Naive thymus-derived CD4-positive, alpha-beta T cell (primary cell): ENCODE measurements at regions of chr3 and their contacts with region 1.

Region 1: DNA sequence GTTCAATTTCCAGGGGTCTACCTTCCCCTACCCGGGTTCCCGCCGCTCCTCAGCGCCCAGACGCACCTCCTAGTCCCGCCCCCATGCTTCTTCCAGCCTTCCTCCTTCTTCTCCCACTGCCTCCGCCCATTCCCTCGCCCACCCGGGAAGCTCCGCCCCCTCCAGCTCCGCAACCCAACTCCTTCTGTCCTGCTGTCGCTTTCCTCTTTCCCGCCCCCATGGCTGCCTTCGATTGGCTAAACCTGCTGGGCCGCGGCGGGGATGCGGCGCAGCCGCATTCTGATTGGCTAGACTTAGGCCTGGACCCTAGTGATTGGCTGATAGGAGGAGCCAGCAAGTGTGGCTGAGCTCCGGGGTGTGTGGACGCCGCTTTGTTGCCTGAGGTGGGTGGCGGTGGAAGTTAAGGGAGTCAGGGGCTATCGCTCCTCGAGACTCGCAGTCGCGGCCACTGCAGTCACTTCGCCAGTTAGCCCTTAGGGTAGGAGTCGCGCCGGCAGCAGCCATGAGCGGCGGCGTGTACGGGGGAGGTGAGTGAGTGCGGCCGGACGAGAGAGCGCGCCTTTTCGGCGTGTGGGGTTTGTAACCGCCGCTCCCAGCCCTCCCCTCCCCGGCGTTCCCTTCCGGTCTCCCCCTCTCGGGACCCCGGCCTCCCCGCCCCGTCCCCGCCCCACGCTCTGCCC is at the start of gene ACTL6A:
- DNase-seq: peak; percentile 86 to 98 (median 96)
- ATAC-seq: peak; percentile 96
- H3K4me3 ChIP-seq: peak within 1 kb of the TSS; percentile 73
- H3K4me3 Mint-ChIP-seq: peak within 1 kb of the TSS; percentile 91 to 100 (median 99)
- H3K27ac ChIP-seq: peak within 1 kb of the TSS; percentile 78
- H3K27ac Mint-ChIP-seq: peak within 1 kb of the TSS; percentile 86 to 98 (median 95)
- H3K4me1 ChIP-seq: peaks cover 10% of the 10 kb centered on the region in 2 donors
- H3K4me1 Mint-ChIP-seq: peaks cover 13 to 49% (median 33%) of the 10 kb centered on the region in 7 donors
- H3K27me3 ChIP-seq: no peaks in the 10 kb centered on the region
- H3K27me3 Mint-ChIP-seq: peaks cover 0 to 13% (median 0%) of the 10 kb centered on the region in 5 donors
- total RNA-seq, gene ACTL6A: 23.2 to 78.3 (median 49.0) TPM

Region 2: DNA sequence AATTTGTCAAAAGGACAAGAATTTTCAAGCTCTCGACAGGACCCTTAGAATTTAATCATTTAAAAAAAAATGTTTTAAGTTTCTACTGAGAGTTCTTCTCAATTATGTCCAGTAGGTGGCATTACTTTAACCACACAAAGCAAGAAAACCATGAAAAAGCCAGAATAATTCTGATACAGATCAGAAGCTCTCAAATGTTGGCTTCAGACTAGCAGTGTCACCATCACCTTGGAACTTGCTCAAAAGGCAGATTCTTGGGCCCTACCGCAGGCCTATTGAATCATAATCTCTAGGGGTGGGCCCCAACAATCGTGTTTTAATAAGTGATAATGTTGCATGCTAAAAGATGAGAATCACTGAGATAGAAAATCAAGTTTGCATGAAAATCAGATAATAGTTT is 1126.0 kb before region 1 on chr3:
- CTCF ChIA-PET with region 1: no interaction called
- POLR2A ChIA-PET with region 1: no interaction called
- intact Hi-C with region 1: loop called in 1 of 2 experiments (anchors 2 kb)
- DNase-seq: peak in 5 of 9 donors; percentile 1 to 26 (median 13)
- ATAC-seq: peak; percentile 59
- H3K4me3 ChIP-seq: no peak overlapping the region
- H3K4me3 Mint-ChIP-seq: no peak overlapping the region
- H3K27ac ChIP-seq: no peak overlapping the region
- H3K27ac Mint-ChIP-seq: no peak overlapping the region
- H3K4me1 ChIP-seq: no peaks in the 10 kb centered on the region
- H3K4me1 Mint-ChIP-seq: no peaks in the 10 kb centered on the region
- H3K27me3 ChIP-seq: no peaks in the 10 kb centered on the region
- H3K27me3 Mint-ChIP-seq: peaks cover 0 to 8% (median 0%) of the 10 kb centered on the region in 5 donors

Region 3: GRCh38 chr3:179105881-179106280 is 456.9 kb before region 1 on chr3:
- CTCF ChIA-PET with region 1: no interaction called
- POLR2A ChIA-PET with region 1: no interaction called
- intact Hi-C with region 1: loop called (anchors 1 kb)
- DNase-seq: no peak
- ATAC-seq: no peak
- H3K4me3 ChIP-seq: no peak overlapping the region
- H3K4me3 Mint-ChIP-seq: no peak overlapping the region
- H3K27ac ChIP-seq: no peak overlapping the region
- H3K27ac Mint-ChIP-seq: peak overlapping the region in 1 of 9 donors; percentile 84
- H3K4me1 ChIP-seq: no peaks in the 10 kb centered on the region
- H3K4me1 Mint-ChIP-seq: peaks cover 0 to 5% (median 3%) of the 10 kb centered on the region in 7 donors
- H3K27me3 ChIP-seq: no peaks in the 10 kb centered on the region
- H3K27me3 Mint-ChIP-seq: peaks cover 0 to 12% (median 5%) of the 10 kb centered on the region in 5 donors

Region 4: DNA sequence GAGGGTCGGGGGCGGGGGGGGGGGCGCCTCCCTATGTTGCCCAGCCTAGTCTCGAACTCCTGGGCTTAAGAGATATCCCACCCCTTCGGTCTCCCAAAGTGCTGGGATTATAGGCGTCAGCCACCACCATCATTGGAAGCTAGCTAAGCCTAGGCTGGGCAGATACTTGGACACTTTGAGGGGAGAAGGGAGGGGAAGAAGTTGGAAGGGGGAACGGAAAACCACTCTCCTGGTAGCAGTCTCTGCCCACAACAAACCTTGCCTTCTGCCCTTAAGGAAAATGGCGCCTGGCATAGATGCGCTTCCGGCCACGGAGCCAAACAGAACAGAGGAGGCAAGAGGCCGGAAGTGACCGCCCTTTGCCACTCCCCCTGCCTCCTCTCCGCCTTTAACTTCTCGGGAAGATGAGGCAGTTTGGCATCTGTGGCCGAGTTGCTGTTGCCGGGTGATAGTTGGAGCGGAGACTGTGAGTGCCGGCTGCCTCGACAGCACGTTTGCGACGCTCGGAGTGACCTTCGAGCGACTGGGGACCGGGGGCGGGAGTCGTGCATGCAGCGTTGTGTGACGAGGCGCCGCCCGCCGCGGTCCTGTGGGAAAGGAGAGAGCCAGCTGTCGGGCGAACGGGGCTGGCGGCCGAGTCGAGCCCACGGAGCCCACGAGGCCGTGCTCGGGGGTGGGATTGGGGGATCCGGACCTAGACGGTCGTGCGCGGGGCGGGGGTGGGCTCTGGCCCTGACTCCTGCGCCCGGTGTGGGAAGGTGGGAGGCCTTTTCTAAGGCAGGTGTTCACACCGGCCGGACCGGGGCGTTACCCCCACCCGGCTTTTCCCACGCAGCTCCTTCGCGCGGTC is 215.2 kb before region 1 on chr3 and contains the start of gene MFN1:
- CTCF ChIA-PET with region 1: interaction called, 3 read pairs
- POLR2A ChIA-PET with region 1: interaction called, 5 read pairs
- intact Hi-C with region 1: loop called (anchors 1 kb)
- DNase-seq: peak; percentile 69 to 91 (median 88)
- ATAC-seq: peak; percentile 99
- H3K4me3 ChIP-seq: peak within 1 kb of the TSS; percentile 99
- H3K4me3 Mint-ChIP-seq: peak within 1 kb of the TSS; percentile 97 to 100 (median 98)
- H3K27ac ChIP-seq: peak within 1 kb of the TSS; percentile 81
- H3K27ac Mint-ChIP-seq: peak within 1 kb of the TSS; percentile 84 to 98 (median 94)
- H3K4me1 ChIP-seq: peaks cover 8 to 13% of the 10 kb centered on the region in 2 donors
- H3K4me1 Mint-ChIP-seq: peaks cover 7 to 39% (median 28%) of the 10 kb centered on the region in 7 donors
- H3K27me3 ChIP-seq: no peaks in the 10 kb centered on the region
- H3K27me3 Mint-ChIP-seq: no peaks in the 10 kb centered on the region
- total RNA-seq, gene MFN1: 32.2 to 58.1 (median 40.3) TPM

Region 5: GRCh38 chr3:179421500-179421899 is 141.2 kb before region 1 on chr3:
- CTCF ChIA-PET with region 1: no interaction called
- POLR2A ChIA-PET with region 1: no interaction called
- intact Hi-C with region 1: no loop called
- DNase-seq: no peak
- ATAC-seq: no peak
- H3K4me3 ChIP-seq: no peak overlapping the region
- H3K4me3 Mint-ChIP-seq: no peak overlapping the region
- H3K27ac ChIP-seq: no peak overlapping the region
- H3K27ac Mint-ChIP-seq: no peak overlapping the region
- H3K4me1 ChIP-seq: no peaks in the 10 kb centered on the region
- H3K4me1 Mint-ChIP-seq: no peaks in the 10 kb centered on the region
- H3K27me3 ChIP-seq: no peaks in the 10 kb centered on the region
- H3K27me3 Mint-ChIP-seq: peaks cover 0 to 5% (median 0%) of the 10 kb centered on the region in 5 donors

Region 6: GRCh38 chr3:179526989-179527391 is 35.7 kb before region 1 on chr3:
- CTCF ChIA-PET with region 1: no interaction called
- POLR2A ChIA-PET with region 1: no interaction called
- intact Hi-C with region 1: no loop called
- DNase-seq: no peak
- ATAC-seq: no peak
- H3K4me3 ChIP-seq: no peak overlapping the region
- H3K4me3 Mint-ChIP-seq: no peak overlapping the region
- H3K27ac ChIP-seq: no peak overlapping the region
- H3K27ac Mint-ChIP-seq: no peak overlapping the region
- H3K4me1 ChIP-seq: no peaks in the 10 kb centered on the region
- H3K4me1 Mint-ChIP-seq: peaks cover 0 to 5% (median 0%) of the 10 kb centered on the region in 7 donors
- H3K27me3 ChIP-seq: no peaks in the 10 kb centered on the region
- H3K27me3 Mint-ChIP-seq: peaks cover 0 to 26% (median 12%) of the 10 kb centered on the region in 5 donors

Region 7: DNA sequence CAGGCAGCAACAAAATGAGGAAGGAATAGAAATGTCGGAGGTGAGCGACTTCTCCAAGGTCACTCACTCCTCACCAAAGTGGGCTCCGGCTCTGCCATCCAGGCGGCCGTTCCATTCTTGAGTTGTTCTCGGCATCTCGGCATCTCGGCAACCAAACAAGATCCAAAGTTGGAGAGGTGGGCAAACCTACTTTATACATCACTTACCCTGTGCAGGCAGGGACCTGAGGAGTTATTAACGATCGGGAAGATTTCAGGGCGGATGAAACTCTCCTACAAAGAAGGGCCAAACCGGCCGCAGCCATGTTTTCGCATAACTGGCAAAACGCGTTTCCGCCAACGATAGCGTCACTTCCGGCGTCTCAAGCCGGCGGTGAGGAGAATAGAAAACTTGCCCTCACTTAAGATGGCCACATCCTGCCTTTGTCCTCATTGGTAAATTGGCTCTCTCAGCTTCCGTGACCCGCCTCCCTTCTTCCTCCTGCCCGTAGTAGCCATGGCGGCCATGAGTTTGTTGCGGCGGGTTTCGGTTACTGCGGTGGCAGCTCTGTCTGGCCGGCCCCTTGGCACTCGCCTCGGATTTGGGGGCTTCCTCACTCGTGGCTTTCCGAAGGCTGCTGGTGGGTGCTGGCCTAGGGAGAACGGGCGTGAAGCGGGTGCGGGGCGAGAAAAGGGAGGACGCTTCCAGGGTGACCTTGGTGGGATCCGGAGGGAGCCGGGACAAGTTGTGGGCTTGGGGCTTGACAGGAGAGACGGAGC is 41.8 kb after region 1 on chr3 and contains the starts of genes MRPL47 and NDUFB5:
- CTCF ChIA-PET with region 1: no interaction called
- POLR2A ChIA-PET with region 1: interaction called, 13 read pairs
- intact Hi-C with region 1: loop called (anchors 1 kb)
- DNase-seq: peak; percentile 76 to 95 (median 92)
- ATAC-seq: peak; percentile 100
- H3K4me3 ChIP-seq: peak within 1 kb of the TSS; percentile 95
- H3K4me3 Mint-ChIP-seq: peak within 1 kb of the TSS; percentile 95 to 99 (median 99)
- H3K27ac ChIP-seq: peak within 1 kb of the TSS; percentile 90
- H3K27ac Mint-ChIP-seq: peak within 1 kb of the TSS; percentile 98 to 100 (median 99)
- H3K4me1 ChIP-seq: peaks cover 15 to 25% of the 10 kb centered on the region in 2 donors
- H3K4me1 Mint-ChIP-seq: peaks cover 23 to 65% (median 46%) of the 10 kb centered on the region in 7 donors
- H3K27me3 ChIP-seq: no peaks in the 10 kb centered on the region
- H3K27me3 Mint-ChIP-seq: no peaks in the 10 kb centered on the region
- total RNA-seq, gene MRPL47: 14.4 to 41.4 (median 18.5) TPM
- total RNA-seq, gene NDUFB5: 33.4 to 80.2 (median 62.8) TPM

Region 8: GRCh38 chr3:180912304-180913296 is 1349.9 kb after region 1 on chr3 and contains the start of gene FXR1:
- CTCF ChIA-PET with region 1: no interaction called
- POLR2A ChIA-PET with region 1: no interaction called
- intact Hi-C with region 1: loop called in 1 of 2 experiments (anchors 5 kb)
- DNase-seq: peak; percentile 80 to 91 (median 89)
- ATAC-seq: peak; percentile 95
- H3K4me3 ChIP-seq: peak within 1 kb of the TSS; percentile 80
- H3K4me3 Mint-ChIP-seq: peak within 1 kb of the TSS; percentile 91 to 98 (median 96)
- H3K27ac ChIP-seq: peak within 1 kb of the TSS; percentile 97
- H3K27ac Mint-ChIP-seq: peak within 1 kb of the TSS; percentile 94 to 100 (median 97)
- H3K4me1 ChIP-seq: peaks cover 17 to 25% of the 10 kb centered on the region in 2 donors
- H3K4me1 Mint-ChIP-seq: peaks cover 35 to 76% (median 67%) of the 10 kb centered on the region in 7 donors
- H3K27me3 ChIP-seq: no peaks in the 10 kb centered on the region
- H3K27me3 Mint-ChIP-seq: no peaks in the 10 kb centered on the region
- total RNA-seq, gene FXR1: 108 to 151 (median 129) TPM